ENCODE measurements at regions of chr3 and their contacts with region 1.

Region 1: GRCh38 chr3:195850857-195851543 is 39.3 kb upstream of the MUC4 start:
- DNase-seq: peak; percentile 82
- H3K4me3 Mint-ChIP-seq: no peak overlapping the region
- H3K27ac Mint-ChIP-seq: no peak overlapping the region
- H3K4me1 Mint-ChIP-seq: peaks cover 14% of the 10 kb centered on the region
- H3K27me3 Mint-ChIP-seq: no peaks in the 10 kb centered on the region

Region 2: GRCh38 chr3:195612075-195612800 is 238.8 kb before region 1 on chr3:
- intact Hi-C with region 1: no loop called
- DNase-seq: no peak
- H3K4me3 Mint-ChIP-seq: no peak overlapping the region
- H3K27ac Mint-ChIP-seq: no peak overlapping the region
- H3K4me1 Mint-ChIP-seq: peaks cover 23% of the 10 kb centered on the region
- H3K27me3 Mint-ChIP-seq: no peaks in the 10 kb centered on the region

Region 3: GRCh38 chr3:196207833-196208607 is 357.0 kb after region 1 on chr3:
- intact Hi-C with region 1: loop called (anchors 10 kb)
- DNase-seq: peak; percentile 43
- H3K4me3 Mint-ChIP-seq: peak overlapping the region; percentile 74
- H3K27ac Mint-ChIP-seq: no peak overlapping the region
- H3K4me1 Mint-ChIP-seq: peaks cover 4% of the 10 kb centered on the region
- H3K27me3 Mint-ChIP-seq: peaks cover 24% of the 10 kb centered on the region

Measured in activated T-helper 2 cell treated with anti-CD3 and anti-CD28 coated beads, Interferon-gamma antibody, Interleukin-2, Interleukin-4, amounts not matched to agents 10 μg/mL and 5 μg/mL and 100 μg/mL, durations not matched to agents 14 hours and 24 hours and 36 hours (primary cell).